SK-N-SH (cell line): ENCODE measurements at regions of chr17 and their contacts with region 1.

Region 1: GRCh38 chr17:81101614-81102306 is 63.5 kb upstream of the PVALEF start:
- DNase-seq: peak; percentile 100
- H3K4me3 ChIP-seq: peak overlapping the region in 1 of 2 experiments; percentile 24; a peak in 1 of 4 replicates
- H3K27ac ChIP-seq: no peak overlapping the region
- H3K4me1 ChIP-seq: peaks cover 11 to 13% of the 10 kb centered on the region in 2 experiments; a peak in 3 of 4 replicates
- H3K27me3 ChIP-seq: no peaks in the 10 kb centered on the region
- CTCF ChIP-seq: peak; percentile 100
- EP300 ChIP-seq: no peak
- RAD21 ChIP-seq: peak; percentile 97

Region 2: DNA sequence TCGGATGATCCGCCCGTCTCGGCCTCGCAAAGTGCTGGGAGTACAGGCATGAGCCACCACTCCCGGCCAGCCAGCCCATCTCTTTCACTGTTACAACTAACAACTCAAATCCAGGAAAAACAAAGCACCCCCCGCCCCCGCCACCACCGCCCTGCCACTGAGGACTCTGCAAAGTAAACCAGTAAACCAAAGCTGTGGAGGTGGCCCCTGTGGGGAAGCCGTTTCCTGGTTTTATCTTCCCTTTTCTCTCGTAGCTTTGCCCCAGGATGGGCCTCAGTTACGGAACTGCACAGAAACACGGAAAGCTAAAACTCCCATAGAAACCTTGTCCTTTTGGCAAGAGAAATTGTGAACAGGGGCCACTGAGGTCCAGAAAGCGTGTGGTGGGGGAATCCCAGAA is 92.6 kb before region 1 on chr17:
- CTCF ChIA-PET with region 1: interaction called, 45 read pairs
- POLR2A ChIA-PET with region 1: no interaction called
- DNase-seq: no peak
- H3K4me3 ChIP-seq: no peak overlapping the region
- H3K27ac ChIP-seq: no peak overlapping the region
- H3K4me1 ChIP-seq: no peaks in the 10 kb centered on the region; a peak in 1 of 4 replicates
- H3K27me3 ChIP-seq: peaks cover 65% of the 10 kb centered on the region
- CTCF ChIP-seq: no peak
- EP300 ChIP-seq: no peak
- RAD21 ChIP-seq: no peak

Region 3: GRCh38 chr17:81040791-81041337 is 60.9 kb before region 1 on chr17:
- CTCF ChIA-PET with region 1: interaction called, 36 read pairs
- POLR2A ChIA-PET with region 1: no interaction called
- DNase-seq: peak; percentile 77
- H3K4me3 ChIP-seq: no peak overlapping the region; a peak in 1 of 4 replicates
- H3K27ac ChIP-seq: peak overlapping the region in 1 of 2 experiments; percentile 30; a peak in 2 of 4 replicates
- H3K4me1 ChIP-seq: peaks cover 30 to 85% of the 10 kb centered on the region in 2 experiments; a peak in 3 of 4 replicates
- H3K27me3 ChIP-seq: no peaks in the 10 kb centered on the region
- CTCF ChIP-seq: peak; percentile 67
- EP300 ChIP-seq: no peak
- RAD21 ChIP-seq: no peak

Region 4: GRCh38 chr17:81064678-81065475 is 36.9 kb before region 1 on chr17:
- CTCF ChIA-PET with region 1: interaction called, 22 read pairs
- POLR2A ChIA-PET with region 1: no interaction called
- DNase-seq: peak; percentile 72
- H3K4me3 ChIP-seq: no peak overlapping the region
- H3K27ac ChIP-seq: peak overlapping the region in 1 of 2 experiments; percentile 64; a peak in 2 of 4 replicates
- H3K4me1 ChIP-seq: peaks cover 0 to 54% of the 10 kb centered on the region in 2 experiments; a peak in 1 of 4 replicates
- H3K27me3 ChIP-seq: no peaks in the 10 kb centered on the region
- CTCF ChIP-seq: no peak
- EP300 ChIP-seq: no peak
- RAD21 ChIP-seq: no peak

Region 5: GRCh38 chr17:81125573-81126081 is 23.9 kb after region 1 on chr17:
- CTCF ChIA-PET with region 1: interaction called, 177 read pairs
- POLR2A ChIA-PET with region 1: no interaction called
- DNase-seq: no peak
- H3K4me3 ChIP-seq: no peak overlapping the region
- H3K27ac ChIP-seq: no peak overlapping the region
- H3K4me1 ChIP-seq: no peaks in the 10 kb centered on the region; a peak in 1 of 4 replicates
- H3K27me3 ChIP-seq: peaks cover 6% of the 10 kb centered on the region; the same call in 1 of the 2 replicates
- CTCF ChIP-seq: no peak
- EP300 ChIP-seq: no peak
- RAD21 ChIP-seq: no peak